ENCODE measurements at regions of chr7 and their contacts with region 1.

Region 1: GRCh38 chr7:74026903-74027551 is 946 bp upstream of the ELN start:
- DNase-seq: peak; percentile 80
- ATAC-seq: peak; percentile 89
- H3K4me3 Mint-ChIP-seq: no peak overlapping the region
- H3K27ac Mint-ChIP-seq: no peak overlapping the region
- H3K4me1 Mint-ChIP-seq: peaks cover 4% of the 10 kb centered on the region
- H3K27me3 Mint-ChIP-seq: peaks cover 40% of the 10 kb centered on the region

Region 2: GRCh38 chr7:73865738-73866445 is 161.1 kb before region 1 on chr7:
- CTCF ChIA-PET with region 1: interaction called, 8 read pairs
- POLR2A ChIA-PET with region 1: no interaction called
- intact Hi-C with region 1: loop called (anchors 1 to 2 kb)
- DNase-seq: peak; percentile 48
- ATAC-seq: peak; percentile 36
- H3K4me3 Mint-ChIP-seq: no peak overlapping the region
- H3K27ac Mint-ChIP-seq: no peak overlapping the region
- H3K4me1 Mint-ChIP-seq: no peaks in the 10 kb centered on the region
- H3K27me3 Mint-ChIP-seq: no peaks in the 10 kb centered on the region

Region 3: DNA sequence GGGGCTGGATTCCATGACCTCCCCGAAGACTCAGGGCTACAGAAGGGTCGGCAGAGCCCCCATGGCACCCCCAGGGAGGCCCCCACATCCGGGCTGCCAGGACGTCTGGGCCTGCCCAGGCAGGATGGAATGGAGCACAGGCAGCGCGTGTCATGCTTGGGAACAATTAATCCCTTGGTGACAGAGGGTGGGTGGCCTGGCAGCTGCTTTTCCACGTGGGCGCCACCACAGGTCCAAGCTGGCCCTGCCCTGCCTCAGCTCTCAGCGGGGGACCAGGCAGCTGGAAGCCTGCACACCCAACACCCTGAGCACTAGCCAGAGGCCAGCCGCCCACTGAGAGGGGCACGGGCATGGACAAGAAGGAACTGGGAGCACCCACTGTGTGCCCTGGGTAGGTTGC is 12.3 kb after region 1 on chr7:
- CTCF ChIA-PET with region 1: interaction called, 16 read pairs
- POLR2A ChIA-PET with region 1: interaction called, 3 read pairs
- intact Hi-C with region 1: no loop called
- DNase-seq: no peak
- ATAC-seq: no peak
- H3K4me3 Mint-ChIP-seq: no peak overlapping the region
- H3K27ac Mint-ChIP-seq: no peak overlapping the region
- H3K4me1 Mint-ChIP-seq: no peaks in the 10 kb centered on the region
- H3K27me3 Mint-ChIP-seq: no peaks in the 10 kb centered on the region

Measured in activated CD4-positive, alpha-beta T cell treated with anti-CD3 and anti-CD28 coated beads for 36 hours (primary cell).